ENCODE measurements at regions of chr4 and their contacts with region 1.

Region 1: GRCh38 chr4:141335166-141335565 is 114.5 kb downstream of the ZNF330 start:
- DNase-seq: no peak
- ATAC-seq: no peak
- H3K4me3 ChIP-seq: no peak overlapping the region
- H3K27ac ChIP-seq: no peak overlapping the region
- H3K4me1 ChIP-seq: no peaks in the 10 kb centered on the region
- H3K27me3 ChIP-seq: no peaks in the 10 kb centered on the region
- CTCF ChIP-seq: no peak
- EP300 ChIP-seq: no peak
- POLR2A ChIP-seq: no peak
- RAD21 ChIP-seq: no peak

Region 2: GRCh38 chr4:141346144-141346543 is 11.0 kb after region 1 on chr4:
- CTCF ChIA-PET with region 1: interaction called, 10 read pairs
- POLR2A ChIA-PET with region 1: no interaction called
- RAD21 ChIA-PET with region 1: interaction called, 3 read pairs
- SMC1A ChIA-PET with region 1: interaction called, 4 read pairs
- in situ Hi-C with region 1: no loop called
- intact Hi-C with region 1: no loop called
- DNase-seq: no peak
- ATAC-seq: peak; percentile 56; the same call in 2 of the 3 replicates
- H3K4me3 ChIP-seq: no peak overlapping the region
- H3K27ac ChIP-seq: no peak overlapping the region
- H3K4me1 ChIP-seq: peaks cover 5% of the 10 kb centered on the region; the same call in 1 of the 2 replicates
- H3K27me3 ChIP-seq: no peaks in the 10 kb centered on the region
- CTCF ChIP-seq: peak; percentile 29 to 55 (median 36); a peak in 3 of 6 replicates
- EP300 ChIP-seq: no peak
- POLR2A ChIP-seq: no peak
- RAD21 ChIP-seq: peak; percentile 83